ENCODE measurements at regions of chr7 and their contacts with region 1.

Region 1: DNA sequence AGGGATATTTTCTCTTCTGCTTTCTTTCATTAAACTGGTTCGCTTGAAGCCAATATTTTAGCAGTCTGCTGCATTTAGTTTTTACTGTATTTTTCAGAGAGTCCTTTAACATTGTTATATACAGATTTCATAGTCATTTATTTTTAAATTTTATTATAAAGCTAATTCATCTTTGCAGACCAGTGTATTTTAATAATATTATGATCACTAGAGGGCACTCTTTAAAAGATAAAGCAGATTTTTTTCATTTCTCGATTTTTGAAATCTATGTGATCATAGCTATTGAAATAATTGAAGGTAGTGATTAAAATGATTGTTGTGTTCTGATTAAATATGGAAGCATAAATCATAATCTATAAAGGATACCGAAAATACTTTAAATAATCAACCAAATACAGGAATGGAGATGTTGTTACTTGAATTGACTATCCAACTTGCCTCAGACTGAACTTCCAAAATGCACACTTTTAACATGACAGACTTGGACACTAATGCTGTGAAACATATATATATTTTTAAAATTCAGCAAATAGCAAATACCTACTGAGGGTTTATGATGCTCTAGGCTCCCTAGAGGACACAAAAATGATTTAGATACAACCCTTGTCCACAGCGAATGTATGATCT is 35.2 kb downstream of the ST7 start:
- DNase-seq: no peak

Region 2: DNA sequence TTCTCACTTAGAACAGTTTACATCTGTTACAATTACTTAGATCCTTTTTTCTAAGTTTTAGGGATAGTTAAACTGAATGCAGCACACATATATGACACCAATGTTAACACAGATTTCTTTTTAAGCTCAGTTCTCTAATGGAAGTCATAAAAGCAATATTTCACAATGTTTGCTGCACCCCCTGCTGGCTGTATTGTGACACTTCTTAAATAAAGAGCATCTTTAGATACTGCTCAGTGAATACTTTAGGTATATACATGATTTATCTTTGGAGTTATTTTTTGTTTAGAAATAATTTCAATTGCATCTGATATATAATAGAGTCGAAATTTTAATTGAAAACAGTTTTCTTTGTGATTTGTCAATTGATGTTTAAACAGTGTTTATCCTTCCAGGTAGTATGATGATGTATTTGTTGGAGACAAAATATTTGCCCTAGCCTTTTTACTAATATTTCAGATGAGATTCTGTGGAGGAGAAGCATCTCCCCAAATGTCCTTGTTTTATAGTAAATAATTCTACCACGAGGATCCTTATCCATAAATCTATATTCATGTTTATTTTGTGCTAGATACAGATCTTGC is 139.2 kb after region 1 on chr7:
- CTCF ChIA-PET with region 1: interaction called, 25 read pairs
- POLR2A ChIA-PET with region 1: no interaction called
- DNase-seq: no peak

Measured in HEK293T (cell line).